ENCODE measurements at regions of chr3 and their contacts with region 1.

Region 1: GRCh38 chr3:136427236-136427635 is 177.1 kb downstream of the PCCB start:
- DNase-seq: no peak
- H3K4me3 ChIP-seq: no peak overlapping the region
- H3K27ac ChIP-seq: no peak overlapping the region
- H3K4me1 ChIP-seq: no peaks in the 10 kb centered on the region
- H3K27me3 ChIP-seq: no peaks in the 10 kb centered on the region
- CTCF ChIP-seq: no peak
- EP300 ChIP-seq: no peak
- POLR2A ChIP-seq: no peak

Region 2: GRCh38 chr3:136444581-136444980 is 17.3 kb after region 1 on chr3:
- intact Hi-C with region 1: loop called in 1 of 4 experiments (anchors 2 kb)
- DNase-seq: no peak
- H3K4me3 ChIP-seq: no peak overlapping the region
- H3K27ac ChIP-seq: no peak overlapping the region
- H3K4me1 ChIP-seq: no peaks in the 10 kb centered on the region
- H3K27me3 ChIP-seq: no peaks in the 10 kb centered on the region
- CTCF ChIP-seq: no peak
- EP300 ChIP-seq: no peak
- POLR2A ChIP-seq: no peak